Panc1 (cell line): ENCODE measurements at regions of chr10 and their contacts with region 1.

Region 1: DNA sequence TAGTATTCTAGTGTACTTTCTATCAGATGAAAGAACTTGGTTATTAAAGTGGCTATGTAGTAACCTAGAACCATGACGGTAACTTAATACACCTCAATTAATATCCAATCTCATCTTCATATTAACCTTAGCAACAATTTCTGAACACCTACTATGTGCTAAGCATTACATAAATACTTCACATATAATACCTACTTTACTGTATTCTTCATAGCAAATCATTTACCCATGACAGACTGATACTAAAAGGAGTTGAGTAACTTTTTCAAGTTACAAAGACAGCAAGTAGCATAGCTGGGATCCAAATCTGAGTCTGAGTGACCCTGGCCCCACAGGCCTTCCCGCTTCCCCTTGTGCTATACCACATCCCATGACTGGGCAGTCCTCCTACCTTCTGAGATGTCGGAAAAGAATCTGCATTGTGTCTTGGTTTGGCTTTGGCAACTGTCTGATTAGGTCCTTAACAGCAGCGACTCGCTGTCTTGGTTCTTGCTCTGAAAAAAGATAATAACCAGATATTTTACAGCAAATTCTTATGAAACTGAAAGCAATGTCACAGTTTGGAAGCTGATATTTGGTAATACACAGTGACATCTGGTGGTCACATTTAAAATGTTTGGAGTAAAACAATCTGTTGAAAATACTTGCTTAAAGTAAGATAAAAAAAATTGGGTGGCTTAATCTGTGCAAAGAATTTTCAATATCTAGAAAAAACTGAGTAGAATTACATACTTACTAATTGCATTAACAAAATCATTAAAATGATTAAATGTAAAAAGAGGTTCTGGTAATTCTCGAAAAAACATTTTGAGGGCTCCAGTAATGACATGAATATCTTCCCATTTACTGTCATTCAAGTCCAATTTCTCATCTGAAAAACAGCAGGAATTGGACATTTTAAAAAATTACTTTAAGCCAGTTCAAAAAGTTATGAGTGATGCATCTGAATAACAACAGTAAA is 120.1 kb downstream of the ARHGAP12 start:
- DNase-seq: peak; percentile 25
- ATAC-seq: no peak
- H3K4me3 ChIP-seq: no peak overlapping the region
- H3K27ac ChIP-seq: peak overlapping the region; percentile 66; the same call in 1 of the 2 replicates
- H3K4me1 ChIP-seq: no peaks in the 10 kb centered on the region
- H3K27me3 ChIP-seq: no peaks in the 10 kb centered on the region
- CTCF ChIP-seq: peak; percentile 38; the same call in 1 of the 2 replicates

Region 2: DNA sequence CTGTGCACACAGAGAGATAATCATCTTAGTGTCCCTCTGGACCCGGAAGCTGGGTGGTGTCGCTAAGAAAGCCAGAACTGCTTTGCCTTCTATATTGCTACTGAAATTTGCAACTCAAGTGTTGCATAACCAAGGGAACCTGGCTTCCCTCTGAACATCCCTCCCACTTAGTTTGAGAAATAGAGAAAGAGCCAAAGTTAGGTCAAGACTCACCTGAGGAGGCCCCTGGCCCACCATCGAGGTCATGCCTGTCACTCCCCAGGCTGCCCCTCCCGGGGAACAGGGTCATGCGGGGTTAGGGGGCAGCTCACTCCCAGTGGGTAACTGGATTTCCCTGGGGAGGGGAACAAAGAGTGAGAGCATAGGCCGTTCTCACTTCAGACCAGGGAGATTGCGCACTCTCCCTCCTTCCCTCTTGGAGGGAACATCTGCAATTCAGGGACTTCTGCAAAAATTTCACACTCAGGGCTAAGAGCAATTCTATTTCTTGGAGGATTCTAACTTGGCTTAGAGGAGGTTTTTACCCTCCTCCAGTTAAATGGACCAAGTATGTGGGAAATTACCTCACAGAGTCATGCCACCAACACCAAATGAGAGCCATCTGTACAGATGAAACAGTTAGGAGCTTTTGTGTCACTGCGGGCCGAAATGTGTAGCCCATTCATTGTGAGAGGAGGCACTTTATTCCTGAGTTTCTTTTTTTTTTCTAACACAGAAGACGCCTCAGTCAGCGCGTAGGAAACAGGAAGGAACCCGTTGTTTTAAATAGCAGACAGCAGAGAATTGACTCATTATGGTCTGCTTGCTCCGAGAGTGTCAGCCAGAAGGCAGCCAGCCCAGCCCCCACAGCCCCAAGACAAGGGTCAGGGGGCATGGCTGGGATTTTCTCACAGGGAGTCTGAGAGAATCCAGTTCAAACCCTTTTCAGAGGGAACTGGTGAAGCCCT is 101.2 kb before region 1 on chr10:
- CTCF ChIA-PET with region 1: no interaction called
- POLR2A ChIA-PET with region 1: no interaction called
- in situ Hi-C with region 1: no loop called
- intact Hi-C with region 1: loop called (anchors 5 kb)
- DNase-seq: no peak
- ATAC-seq: peak; percentile 38; the same call in 1 of the 2 replicates
- H3K4me3 ChIP-seq: no peak overlapping the region
- H3K27ac ChIP-seq: peak overlapping the region; percentile 48; the same call in 1 of the 2 replicates
- H3K4me1 ChIP-seq: peaks cover 8% of the 10 kb centered on the region
- H3K27me3 ChIP-seq: no peaks in the 10 kb centered on the region
- CTCF ChIP-seq: no peak